ENCODE measurements at regions of chr15 and their contacts with region 1.

Region 1: GRCh38 chr15:38002883-38003477 is 68.5 kb downstream of the TMCO5A start:
- DNase-seq: no peak
- H3K4me3 ChIP-seq: no peak overlapping the region
- H3K27ac ChIP-seq: no peak overlapping the region
- H3K4me1 ChIP-seq: no peaks in the 10 kb centered on the region
- H3K27me3 ChIP-seq: no peaks in the 10 kb centered on the region
- CTCF ChIP-seq: peak in 5 of 6 experiments; percentile 25 to 74 (median 49)
- POLR2A ChIP-seq: no peak

Region 2: GRCh38 chr15:38354315-38354929 is 351.4 kb after region 1 on chr15:
- intact Hi-C with region 1: loop called (anchors 5 kb)
- DNase-seq: no peak
- H3K4me3 ChIP-seq: no peak overlapping the region
- H3K27ac ChIP-seq: no peak overlapping the region
- H3K4me1 ChIP-seq: peaks cover 0 to 4% (median 0%) of the 10 kb centered on the region in 3 donors
- H3K27me3 ChIP-seq: no peaks in the 10 kb centered on the region
- CTCF ChIP-seq: peak; percentile 50 to 80 (median 71)
- POLR2A ChIP-seq: no peak

Region 3: DNA sequence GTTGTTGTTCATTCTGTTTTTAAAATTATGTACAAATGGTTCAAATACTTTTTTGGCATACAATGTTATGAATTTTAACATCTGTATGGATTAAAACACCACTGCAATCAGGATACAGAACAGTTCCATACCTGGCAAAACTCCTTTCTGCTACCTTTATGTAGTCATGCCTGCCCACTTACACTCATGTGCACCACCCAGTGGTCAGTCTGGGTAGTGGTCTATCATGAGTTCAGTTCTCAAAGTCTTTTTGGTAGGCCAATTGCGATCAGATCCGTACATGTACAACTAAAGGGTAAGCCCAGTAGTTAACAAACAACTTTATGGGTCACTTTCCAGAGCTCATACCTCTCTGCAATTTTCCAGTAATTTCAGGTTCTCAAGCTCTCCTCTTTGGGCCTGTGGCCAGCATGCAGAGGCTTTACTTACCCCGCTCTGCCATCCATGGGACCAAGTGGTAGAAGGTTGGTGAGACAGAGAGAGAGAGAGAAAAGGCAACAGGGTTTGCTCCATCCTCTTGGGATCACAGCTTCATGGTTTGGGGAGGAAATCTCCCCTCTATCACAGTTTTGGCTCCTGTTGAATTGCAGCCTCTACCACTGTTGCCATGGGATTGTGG is 387.1 kb after region 1 on chr15:
- intact Hi-C with region 1: loop called (anchors 10 kb)
- DNase-seq: no peak
- H3K4me3 ChIP-seq: no peak overlapping the region
- H3K27ac ChIP-seq: no peak overlapping the region
- H3K4me1 ChIP-seq: no peaks in the 10 kb centered on the region
- H3K27me3 ChIP-seq: no peaks in the 10 kb centered on the region
- CTCF ChIP-seq: peak; percentile 68 to 82 (median 74)
- POLR2A ChIP-seq: no peak